ENCODE measurements at regions of chr10 and their contacts with region 1.

Region 1: DNA sequence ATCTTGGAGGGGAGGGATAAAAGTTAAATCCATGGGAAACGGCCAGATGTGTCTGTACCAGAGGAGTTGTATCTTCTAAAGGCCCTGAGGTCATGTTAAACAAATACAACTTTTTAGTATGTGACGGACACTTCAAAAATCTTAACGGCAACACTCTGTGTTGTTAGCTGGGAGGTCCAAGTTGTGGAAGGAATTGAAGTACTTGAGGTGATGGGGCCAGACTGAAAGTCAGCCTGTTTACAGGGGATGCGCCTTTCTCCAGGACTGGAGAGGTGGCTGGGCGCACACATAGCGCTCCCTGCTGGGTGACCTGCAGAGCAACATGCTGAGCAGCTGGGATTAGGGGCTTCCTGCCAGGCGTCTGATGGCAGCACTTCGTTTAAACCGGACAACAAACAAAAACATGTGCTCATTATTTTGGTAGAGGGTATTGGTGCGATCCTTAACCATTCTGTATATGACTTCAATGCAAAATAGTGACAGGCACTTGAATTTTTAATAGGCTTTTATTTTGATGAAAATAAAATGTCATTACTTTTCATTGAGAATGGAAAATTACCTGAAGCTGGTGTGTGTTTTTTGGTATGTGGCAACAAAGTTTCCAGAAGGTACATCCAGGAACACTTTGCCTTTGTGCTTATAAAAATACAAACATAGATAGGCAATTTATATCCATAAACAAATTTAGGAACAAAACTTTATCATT is 198.2 kb downstream of the MLLT10 start:
- DNase-seq: peak; percentile 78
- H3K4me3 ChIP-seq: no peak overlapping the region
- H3K27ac ChIP-seq: no peak overlapping the region
- H3K4me1 ChIP-seq: peaks cover 20% of the 10 kb centered on the region
- H3K27me3 ChIP-seq: no peaks in the 10 kb centered on the region
- CTCF ChIP-seq: peak; percentile 93 to 95
- POLR2A ChIP-seq: no peak

Region 2: DNA sequence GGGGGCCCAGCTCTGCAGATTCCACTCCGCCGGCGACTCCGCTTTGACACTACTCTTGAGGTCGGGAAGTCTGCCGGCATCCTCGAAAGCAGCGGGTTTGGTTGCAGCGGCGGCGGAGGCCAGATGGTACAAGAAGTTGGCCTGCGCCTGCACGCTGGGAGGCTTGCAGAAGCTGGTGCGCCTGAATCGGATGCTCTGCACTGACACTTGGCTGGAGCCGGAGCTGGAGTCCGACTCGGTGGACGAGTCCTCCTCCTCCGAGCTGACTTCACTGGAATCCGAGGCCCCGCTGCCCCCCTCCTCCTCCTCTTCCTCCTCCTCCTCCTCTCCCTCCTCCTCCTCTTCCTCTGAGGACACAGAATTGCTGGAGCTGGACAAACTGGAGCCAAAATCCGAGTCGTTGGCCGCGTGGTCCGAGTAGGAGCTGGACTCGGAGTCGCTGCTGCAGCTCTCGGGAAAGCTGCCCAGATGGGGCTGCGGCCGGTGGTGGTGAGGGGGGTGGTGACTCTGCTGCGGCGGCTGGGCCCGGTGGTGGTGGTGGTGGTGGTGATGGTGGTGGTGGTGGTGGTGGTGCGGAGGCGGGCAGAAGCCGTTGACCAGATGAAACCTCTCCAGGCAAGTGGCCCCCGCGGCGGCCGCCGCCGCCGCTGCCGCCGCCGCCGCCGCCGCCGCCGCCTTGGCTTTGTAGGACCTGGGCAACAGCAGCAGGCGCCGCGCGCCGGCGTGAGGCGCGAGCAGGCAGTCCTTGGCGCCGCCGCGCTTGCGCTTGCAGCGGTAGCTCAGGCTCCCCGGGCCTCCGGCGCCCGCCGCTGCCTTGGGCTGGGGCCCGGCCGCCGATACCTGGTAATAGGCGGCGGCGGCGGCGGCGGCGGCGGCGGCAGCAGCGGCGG is 215.7 kb before region 1 on chr10:
- CTCF ChIA-PET with region 1: interaction called, 7 read pairs
- POLR2A ChIA-PET with region 1: interaction called, 3 read pairs
- dilution Hi-C with region 1: no loop called
- intact Hi-C with region 1: loop called (anchors 2 kb)
- DNase-seq: peak; percentile 53
- H3K4me3 ChIP-seq: peak overlapping the region; percentile 31 to 63 (median 40)
- H3K27ac ChIP-seq: no peak overlapping the region
- H3K4me1 ChIP-seq: peaks cover 26% of the 10 kb centered on the region
- H3K27me3 ChIP-seq: no peaks in the 10 kb centered on the region
- CTCF ChIP-seq: no peak
- POLR2A ChIP-seq: no peak

Region 3: GRCh38 chr10:21552638-21553037 is 179.6 kb before region 1 on chr10:
- CTCF ChIA-PET with region 1: interaction called, 14 read pairs
- POLR2A ChIA-PET with region 1: no interaction called
- dilution Hi-C with region 1: no loop called
- intact Hi-C with region 1: no loop called
- DNase-seq: no peak
- H3K4me3 ChIP-seq: no peak overlapping the region
- H3K27ac ChIP-seq: no peak overlapping the region
- H3K4me1 ChIP-seq: peaks cover 3% of the 10 kb centered on the region
- H3K27me3 ChIP-seq: no peaks in the 10 kb centered on the region
- CTCF ChIP-seq: no peak
- POLR2A ChIP-seq: no peak

Region 4: GRCh38 chr10:21648040-21648439 is 84.2 kb before region 1 on chr10:
- CTCF ChIA-PET with region 1: no interaction called
- POLR2A ChIA-PET with region 1: no interaction called
- dilution Hi-C with region 1: no loop called
- intact Hi-C with region 1: no loop called
- DNase-seq: no peak
- H3K4me3 ChIP-seq: no peak overlapping the region
- H3K27ac ChIP-seq: no peak overlapping the region
- H3K4me1 ChIP-seq: no peaks in the 10 kb centered on the region
- H3K27me3 ChIP-seq: no peaks in the 10 kb centered on the region
- CTCF ChIP-seq: no peak
- POLR2A ChIP-seq: no peak

Region 5: GRCh38 chr10:21675157-21675796 is 56.9 kb before region 1 on chr10:
- CTCF ChIA-PET with region 1: interaction called, 3 read pairs
- POLR2A ChIA-PET with region 1: no interaction called
- dilution Hi-C with region 1: no loop called
- intact Hi-C with region 1: loop called (anchors 5 kb)
- DNase-seq: peak; percentile 42
- H3K4me3 ChIP-seq: no peak overlapping the region
- H3K27ac ChIP-seq: no peak overlapping the region
- H3K4me1 ChIP-seq: no peaks in the 10 kb centered on the region
- H3K27me3 ChIP-seq: no peaks in the 10 kb centered on the region
- CTCF ChIP-seq: peak; percentile 71 to 73
- POLR2A ChIP-seq: no peak

Region 6: GRCh38 chr10:21797984-21798765 is 66.0 kb after region 1 on chr10:
- CTCF ChIA-PET with region 1: no interaction called
- POLR2A ChIA-PET with region 1: no interaction called
- dilution Hi-C with region 1: no loop called
- intact Hi-C with region 1: no loop called
- DNase-seq: no peak
- H3K4me3 ChIP-seq: no peak overlapping the region
- H3K27ac ChIP-seq: no peak overlapping the region
- H3K4me1 ChIP-seq: no peaks in the 10 kb centered on the region
- H3K27me3 ChIP-seq: no peaks in the 10 kb centered on the region
- CTCF ChIP-seq: no peak
- POLR2A ChIP-seq: no peak

Region 7: GRCh38 chr10:21953585-21954057 is 221.4 kb after region 1 on chr10:
- CTCF ChIA-PET with region 1: interaction called, 10 read pairs
- POLR2A ChIA-PET with region 1: no interaction called
- dilution Hi-C with region 1: no loop called
- intact Hi-C with region 1: loop called (anchors 10 kb)
- DNase-seq: peak; percentile 70
- H3K4me3 ChIP-seq: no peak overlapping the region
- H3K27ac ChIP-seq: no peak overlapping the region
- H3K4me1 ChIP-seq: no peaks in the 10 kb centered on the region
- H3K27me3 ChIP-seq: no peaks in the 10 kb centered on the region
- CTCF ChIP-seq: peak in 1 of 2 donors; percentile 9
- POLR2A ChIP-seq: no peak